Stomach (tissue), 19 donors: ENCODE measurements at regions of chr1 and their contacts with region 1.

Region 1: GRCh38 chr1:62175568-62176179 is 19.0 kb upstream of the L1TD1 start:
- DNase-seq: peak; percentile 51 to 82
- H3K4me3 ChIP-seq: no peak overlapping the region
- H3K27ac ChIP-seq: no peak overlapping the region
- H3K4me1 ChIP-seq: peaks cover 0 to 9% (median 4%) of the 10 kb centered on the region in 4 donors
- H3K27me3 ChIP-seq: peaks cover 0 to 10% (median 0%) of the 10 kb centered on the region in 3 donors
- CTCF ChIP-seq: peak in 5 of 7 experiments; percentile 56 to 73 (median 60)
- EP300 ChIP-seq: no peak
- POLR2A ChIP-seq: no peak

Region 2: DNA sequence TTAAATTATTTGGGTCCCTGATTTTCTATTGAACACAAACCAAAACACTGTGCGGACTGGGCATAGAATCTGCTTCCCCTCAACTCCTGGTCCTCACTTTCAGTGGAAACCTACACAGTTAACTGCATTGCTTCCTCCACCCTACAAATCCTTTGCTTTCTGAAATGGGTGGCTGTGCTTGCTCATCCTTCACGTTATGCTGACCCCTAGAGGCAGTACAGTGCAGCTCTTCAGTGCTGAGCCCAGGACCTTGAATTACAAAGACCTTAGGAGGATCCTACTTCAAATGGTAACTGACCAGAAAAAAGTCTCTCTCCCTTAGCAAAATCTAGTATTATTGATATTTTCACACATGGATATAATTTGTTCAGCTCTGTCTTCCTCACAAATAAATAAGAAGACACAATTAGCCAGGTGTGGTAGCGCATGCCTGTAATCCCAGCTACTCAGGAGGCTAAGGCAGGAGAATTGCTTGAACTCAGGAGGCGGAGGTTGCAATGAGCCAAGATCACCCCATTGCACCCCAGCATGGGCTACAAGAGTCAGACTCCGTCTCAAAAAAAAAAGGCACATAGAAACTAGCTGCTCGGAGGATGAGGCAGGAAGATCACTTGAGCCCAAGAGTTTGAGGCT is 44.5 kb before region 1 on chr1:
- intact Hi-C with region 1: no loop called
- DNase-seq: peak; percentile 29 to 83
- H3K4me3 ChIP-seq: no peak overlapping the region
- H3K27ac ChIP-seq: no peak overlapping the region
- H3K4me1 ChIP-seq: no peaks in the 10 kb centered on the region
- H3K27me3 ChIP-seq: no peaks in the 10 kb centered on the region
- CTCF ChIP-seq: peak in 5 of 7 experiments; percentile 22 to 64 (median 46)
- EP300 ChIP-seq: no peak
- POLR2A ChIP-seq: no peak

Region 3: DNA sequence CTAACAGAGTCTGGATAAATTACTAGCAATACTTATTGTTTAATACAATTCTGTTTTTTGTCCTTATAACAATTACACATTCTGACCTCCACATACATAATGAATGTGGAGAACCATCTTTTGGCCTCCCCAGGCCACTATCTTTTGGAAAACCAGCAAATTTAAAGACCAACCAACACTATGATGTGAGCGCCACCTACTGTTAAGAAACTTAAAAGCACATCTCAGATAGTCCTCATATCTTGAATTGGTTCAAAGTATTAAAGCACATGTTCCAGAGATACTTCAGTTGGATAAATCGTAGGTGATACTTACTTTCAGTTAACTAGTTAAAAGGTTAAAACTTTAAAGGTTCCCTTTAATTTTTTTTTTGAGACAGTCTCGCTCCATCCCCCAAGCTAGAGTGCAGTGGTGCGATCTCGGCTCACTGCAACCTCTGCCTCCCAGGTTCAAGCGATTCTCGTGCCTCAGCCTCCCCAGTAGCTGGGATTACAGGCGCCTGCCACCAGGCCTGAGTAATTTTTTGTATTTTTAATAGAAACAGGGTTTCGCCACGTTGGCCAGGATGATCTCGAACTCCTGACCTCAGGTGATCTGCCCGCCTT is 231.8 kb after region 1 on chr1:
- intact Hi-C with region 1: loop called (anchors 5 kb)
- DNase-seq: peak in 1 of 2 donors; percentile 86
- H3K4me3 ChIP-seq: no peak overlapping the region
- H3K27ac ChIP-seq: no peak overlapping the region
- H3K4me1 ChIP-seq: no peaks in the 10 kb centered on the region
- H3K27me3 ChIP-seq: no peaks in the 10 kb centered on the region
- CTCF ChIP-seq: peak in 4 of 7 experiments; percentile 18 to 79 (median 72)
- EP300 ChIP-seq: no peak
- POLR2A ChIP-seq: no peak